Psoas muscle (tissue), 8 donors: ENCODE measurements at regions of chr2 and their contacts with region 1.

Region 1: GRCh38 chr2:216215658-216216390 is 106.7 kb downstream of the XRCC5 start:
- DNase-seq: no peak
- ATAC-seq: no peak
- H3K4me3 ChIP-seq: no peak overlapping the region
- H3K27ac ChIP-seq: no peak overlapping the region
- H3K4me1 ChIP-seq: no peaks in the 10 kb centered on the region
- H3K27me3 ChIP-seq: no peaks in the 10 kb centered on the region
- CTCF ChIP-seq: no peak

Region 2: DNA sequence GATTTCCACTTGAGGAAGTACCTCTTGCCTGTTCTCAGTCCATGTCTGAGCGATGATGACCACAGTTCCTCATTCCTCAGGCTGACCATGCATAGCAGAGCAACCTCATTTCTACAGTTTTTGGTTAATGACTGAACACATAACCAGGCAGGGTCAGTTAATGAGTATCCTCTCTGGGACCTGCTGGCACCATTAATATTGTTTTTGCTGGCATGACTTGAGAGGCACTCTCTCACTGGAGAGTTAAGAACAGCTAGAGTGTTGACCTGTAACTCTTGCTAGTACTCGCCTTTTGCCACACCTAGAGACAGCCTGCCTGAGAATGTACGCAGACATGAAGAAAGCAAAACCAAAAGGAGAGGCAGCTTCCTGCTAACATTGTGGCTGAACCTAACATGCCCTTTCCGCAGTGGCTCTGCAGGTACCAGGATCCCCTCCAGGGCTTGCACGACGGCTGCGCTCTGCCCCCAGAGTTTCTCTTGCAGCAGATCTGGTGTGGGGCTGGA is 158.1 kb before region 1 on chr2:
- intact Hi-C with region 1: no loop called
- DNase-seq: no peak
- ATAC-seq: no peak
- H3K4me3 ChIP-seq: no peak overlapping the region
- H3K27ac ChIP-seq: no peak overlapping the region
- H3K4me1 ChIP-seq: no peaks in the 10 kb centered on the region
- H3K27me3 ChIP-seq: no peaks in the 10 kb centered on the region
- CTCF ChIP-seq: no peak

Region 3: GRCh38 chr2:216404010-216404618 is 188.3 kb after region 1 on chr2:
- intact Hi-C with region 1: loop called in 1 of 2 experiments (anchors 5 kb)
- DNase-seq: peak in 1 of 2 donors; percentile 21
- ATAC-seq: peak in 1 of 4 donors; percentile 49
- H3K4me3 ChIP-seq: no peak overlapping the region
- H3K27ac ChIP-seq: no peak overlapping the region
- H3K4me1 ChIP-seq: no peaks in the 10 kb centered on the region
- H3K27me3 ChIP-seq: peaks cover 0 to 3% (median 0%) of the 10 kb centered on the region in 3 donors
- CTCF ChIP-seq: peak; percentile 61